K562 (cell line): ENCODE measurements at regions of chrX and their contacts with region 1.

Region 1: DNA sequence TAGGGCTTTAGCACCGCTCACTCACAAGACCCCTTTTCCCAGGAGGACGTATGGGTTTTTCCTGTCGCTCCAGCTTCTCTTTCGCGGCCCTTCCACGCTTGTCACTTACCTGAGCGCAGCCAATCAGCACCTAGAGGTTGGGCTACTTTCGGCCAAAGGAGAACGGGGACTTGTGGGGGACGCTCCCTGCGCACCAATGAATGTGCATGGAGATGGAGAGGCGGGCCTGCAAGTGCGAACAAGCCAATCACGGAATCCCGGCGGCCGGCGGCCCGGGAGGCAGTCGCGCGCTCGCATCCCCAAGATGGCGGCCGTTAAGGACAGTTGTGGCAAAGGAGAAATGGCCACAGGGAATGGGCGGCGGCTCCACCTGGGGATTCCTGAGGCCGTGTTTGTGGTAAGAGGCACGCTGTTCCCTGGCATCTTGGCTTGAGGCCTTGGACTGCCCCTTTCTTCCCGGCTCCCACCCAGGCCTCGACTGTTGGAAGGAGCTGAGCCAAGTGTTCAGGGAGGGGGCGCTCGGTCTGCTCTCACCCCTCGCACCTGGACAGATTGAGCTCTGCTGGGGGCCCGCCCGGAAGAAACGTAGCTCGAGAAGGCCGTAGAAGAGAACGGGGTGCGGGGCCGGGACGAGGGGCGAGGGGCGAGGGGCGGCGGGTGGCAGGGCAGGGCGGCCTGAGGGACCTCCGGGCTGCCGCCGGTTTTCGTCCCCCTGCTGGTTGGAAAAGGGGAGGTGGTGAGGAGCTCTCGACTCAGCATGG is at the start of gene VBP1:
- DNase-seq: peak; percentile 88 to 96 (median 91)
- ATAC-seq: peak; percentile 96
- H3K4me3 ChIP-seq: peak within 1 kb of the TSS; percentile 80
- H3K27ac ChIP-seq: peak within 1 kb of the TSS; percentile 98
- H3K4me1 ChIP-seq: peaks cover 3 to 22% of the 10 kb centered on the region in 2 experiments; a peak in 3 of 5 replicates
- H3K27me3 ChIP-seq: no peaks in the 10 kb centered on the region
- CTCF ChIP-seq: peak; percentile 34 to 56 (median 46); a peak in 3 of 6 replicates
- EP300 ChIP-seq: no peak
- POLR2A ChIP-seq: peak; percentile 91
- RAD21 ChIP-seq: no peak
- polyA plus RNA-seq, gene VBP1: 245 to 263 TPM

Region 2: GRCh38 chrX:155056877-155057792 is 159.2 kb before region 1 on chrX:
- CTCF ChIA-PET with region 1: no interaction called
- POLR2A ChIA-PET with region 1: no interaction called
- in situ Hi-C with region 1: no loop called
- intact Hi-C with region 1: no loop called
- DNase-seq: peak; percentile 52 to 82 (median 65)
- ATAC-seq: peak; percentile 97
- H3K4me3 ChIP-seq: no peak overlapping the region
- H3K27ac ChIP-seq: no peak overlapping the region
- H3K4me1 ChIP-seq: peaks cover 0 to 9% of the 10 kb centered on the region in 2 experiments; a peak in 3 of 5 replicates
- H3K27me3 ChIP-seq: no peaks in the 10 kb centered on the region
- CTCF ChIP-seq: peak; percentile 72 to 84 (median 76)
- EP300 ChIP-seq: no peak
- POLR2A ChIP-seq: no peak
- RAD21 ChIP-seq: peak; percentile 65 to 80

Region 3: GRCh38 chrX:155070975-155071693 is 145.2 kb before region 1 on chrX and contains the starts of genes BRCC3, CMC4 and MTCP1:
- CTCF ChIA-PET with region 1: no interaction called
- POLR2A ChIA-PET with region 1: no interaction called
- in situ Hi-C with region 1: no loop called
- intact Hi-C with region 1: loop called (anchors 2 kb)
- DNase-seq: peak; percentile 90 to 94 (median 92)
- ATAC-seq: peak; percentile 95
- H3K4me3 ChIP-seq: peak within 1 kb of the TSS; percentile 71
- H3K27ac ChIP-seq: peak within 1 kb of the TSS; percentile 80
- H3K4me1 ChIP-seq: peaks cover 4 to 11% of the 10 kb centered on the region in 2 experiments; a peak in 4 of 5 replicates
- H3K27me3 ChIP-seq: no peaks in the 10 kb centered on the region
- CTCF ChIP-seq: 0 out of 6 replicates have a peak, but pooled peaks of 1 of the 3 experiments have one; percentile 5
- EP300 ChIP-seq: no peak
- POLR2A ChIP-seq: peak; percentile 87
- RAD21 ChIP-seq: no peak
- polyA plus RNA-seq, gene BRCC3: 31.2 to 44.8 TPM
- polyA plus RNA-seq, gene CMC4: 3.5 to 6.3 TPM
- polyA plus RNA-seq, gene MTCP1: 12.7 to 20.9 TPM